ENCODE measurements at regions of chr9 and their contacts with region 1.

Region 1: GRCh38 chr9:23258569-23258968 is 567.5 kb downstream of the ELAVL2 start:
- DNase-seq: no peak
- ATAC-seq: no peak
- H3K4me3 ChIP-seq: no peak overlapping the region
- H3K4me3 Mint-ChIP-seq: no peak overlapping the region
- H3K27ac ChIP-seq: no peak overlapping the region
- H3K27ac Mint-ChIP-seq: no peak overlapping the region
- H3K4me1 ChIP-seq: no peaks in the 10 kb centered on the region
- H3K4me1 Mint-ChIP-seq: no peaks in the 10 kb centered on the region
- H3K27me3 ChIP-seq: no peaks in the 10 kb centered on the region
- H3K27me3 Mint-ChIP-seq: no peaks in the 10 kb centered on the region

Region 2: GRCh38 chr9:23194281-23194680 is 64.3 kb before region 1 on chr9:
- CTCF ChIA-PET with region 1: no interaction called
- POLR2A ChIA-PET with region 1: no interaction called
- intact Hi-C with region 1: loop called in 1 of 2 experiments (anchors 10 kb)
- DNase-seq: no peak
- ATAC-seq: no peak
- H3K4me3 ChIP-seq: no peak overlapping the region
- H3K4me3 Mint-ChIP-seq: no peak overlapping the region
- H3K27ac ChIP-seq: no peak overlapping the region
- H3K27ac Mint-ChIP-seq: no peak overlapping the region
- H3K4me1 ChIP-seq: no peaks in the 10 kb centered on the region
- H3K4me1 Mint-ChIP-seq: no peaks in the 10 kb centered on the region
- H3K27me3 ChIP-seq: no peaks in the 10 kb centered on the region
- H3K27me3 Mint-ChIP-seq: no peaks in the 10 kb centered on the region

Region 3: GRCh38 chr9:23563517-23563916 is 304.9 kb after region 1 on chr9:
- CTCF ChIA-PET with region 1: no interaction called
- POLR2A ChIA-PET with region 1: no interaction called
- intact Hi-C with region 1: no loop called
- DNase-seq: no peak
- ATAC-seq: no peak
- H3K4me3 ChIP-seq: no peak overlapping the region
- H3K4me3 Mint-ChIP-seq: no peak overlapping the region
- H3K27ac ChIP-seq: no peak overlapping the region
- H3K27ac Mint-ChIP-seq: no peak overlapping the region
- H3K4me1 ChIP-seq: no peaks in the 10 kb centered on the region
- H3K4me1 Mint-ChIP-seq: no peaks in the 10 kb centered on the region
- H3K27me3 ChIP-seq: no peaks in the 10 kb centered on the region
- H3K27me3 Mint-ChIP-seq: no peaks in the 10 kb centered on the region